ENCODE measurements at regions of chr7 and their contacts with region 1.

Region 1: DNA sequence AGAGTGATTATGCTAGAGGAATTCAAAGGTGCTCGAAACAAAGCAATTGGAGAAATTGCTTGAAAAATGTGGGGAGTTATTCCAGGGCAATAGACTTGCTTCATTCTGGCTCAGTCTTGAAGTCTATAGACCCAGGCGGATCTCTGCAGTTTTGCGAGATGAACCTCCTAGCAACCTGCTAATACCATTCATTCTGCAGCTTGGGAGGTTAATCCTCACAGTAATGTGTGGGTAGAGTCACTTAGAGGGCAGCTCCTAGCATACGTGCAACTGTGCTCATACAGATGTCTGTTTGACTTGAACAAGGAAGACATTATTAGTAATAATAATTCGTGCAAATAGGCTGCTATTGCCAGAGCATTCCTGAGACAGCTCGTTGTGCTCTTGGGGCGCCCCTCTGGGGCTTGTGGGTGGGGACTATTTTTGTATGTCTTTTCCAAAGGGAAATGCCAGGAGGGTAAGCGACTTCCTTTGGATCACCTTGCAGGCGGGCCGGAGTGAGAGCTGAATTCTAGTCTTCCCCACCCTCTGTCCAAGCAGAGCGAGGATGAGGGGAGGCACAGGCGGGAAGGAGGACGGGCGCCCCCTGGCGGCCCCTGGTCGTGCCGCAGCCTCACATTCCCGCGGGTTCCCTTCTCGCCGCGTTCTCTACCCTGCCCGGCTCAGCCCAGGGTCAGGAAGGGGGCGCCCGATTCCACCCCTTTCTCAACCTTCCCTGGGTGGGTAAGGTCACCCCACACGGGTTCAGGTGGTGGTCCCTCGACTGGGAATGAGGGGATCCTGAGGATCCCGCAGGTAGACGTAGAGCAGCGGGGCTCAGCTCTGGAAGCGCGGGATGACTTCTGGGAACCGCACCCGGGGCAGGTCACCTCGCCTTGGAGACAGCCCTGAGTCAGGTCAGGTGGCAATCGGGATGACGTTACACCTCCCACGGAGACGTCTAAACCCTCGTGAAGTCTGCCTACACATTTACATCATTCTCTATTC is 241.5 kb downstream of the PHTF2 start:
- H3K4me3 ChIP-seq: peak overlapping the region; percentile 18; the same call in 1 of the 2 replicates
- H3K27ac ChIP-seq: no peak overlapping the region
- H3K4me1 ChIP-seq: no peaks in the 10 kb centered on the region
- CTCF ChIP-seq: no peak; the same call in 1 of the 2 replicates

Region 2: GRCh38 chr7:78052112-78052511 is 12.0 kb after region 1 on chr7:
- CTCF ChIA-PET with region 1: interaction called, 13 read pairs
- POLR2A ChIA-PET with region 1: no interaction called
- H3K4me3 ChIP-seq: no peak overlapping the region
- H3K27ac ChIP-seq: no peak overlapping the region
- H3K4me1 ChIP-seq: 0 out of 2 replicates have a peak, but pooled peaks cover 4% of the 10 kb centered on the region
- CTCF ChIP-seq: no peak